CD4-positive, alpha-beta memory T cell (primary cell): ENCODE measurements at regions of chr22 and their contacts with region 1.

Region 1: GRCh38 chr22:25702040-25702439 is 39.9 kb upstream of the MYO18B start:
- DNase-seq: no peak
- H3K4me3 ChIP-seq: no peak overlapping the region
- H3K4me3 Mint-ChIP-seq: no peak overlapping the region
- H3K27ac ChIP-seq: no peak overlapping the region
- H3K27ac Mint-ChIP-seq: peak overlapping the region in 1 of 7 donors; percentile 37
- H3K4me1 ChIP-seq: no peaks in the 10 kb centered on the region
- H3K4me1 Mint-ChIP-seq: peaks cover 0 to 7% (median 3%) of the 10 kb centered on the region in 4 donors
- H3K27me3 ChIP-seq: no peaks in the 10 kb centered on the region
- H3K27me3 Mint-ChIP-seq: no peaks in the 10 kb centered on the region

Region 2: GRCh38 chr22:25465949-25466348 is 236.1 kb before region 1 on chr22:
- CTCF ChIA-PET with region 1: no interaction called
- POLR2A ChIA-PET with region 1: no interaction called
- intact Hi-C with region 1: loop called (anchors 1 kb)
- DNase-seq: no peak
- H3K4me3 ChIP-seq: no peak overlapping the region
- H3K4me3 Mint-ChIP-seq: no peak overlapping the region
- H3K27ac ChIP-seq: no peak overlapping the region
- H3K27ac Mint-ChIP-seq: peak overlapping the region in 1 of 7 donors; percentile 63
- H3K4me1 ChIP-seq: no peaks in the 10 kb centered on the region
- H3K4me1 Mint-ChIP-seq: peaks cover 0 to 7% (median 5%) of the 10 kb centered on the region in 4 donors
- H3K27me3 ChIP-seq: no peaks in the 10 kb centered on the region
- H3K27me3 Mint-ChIP-seq: no peaks in the 10 kb centered on the region

Region 3: DNA sequence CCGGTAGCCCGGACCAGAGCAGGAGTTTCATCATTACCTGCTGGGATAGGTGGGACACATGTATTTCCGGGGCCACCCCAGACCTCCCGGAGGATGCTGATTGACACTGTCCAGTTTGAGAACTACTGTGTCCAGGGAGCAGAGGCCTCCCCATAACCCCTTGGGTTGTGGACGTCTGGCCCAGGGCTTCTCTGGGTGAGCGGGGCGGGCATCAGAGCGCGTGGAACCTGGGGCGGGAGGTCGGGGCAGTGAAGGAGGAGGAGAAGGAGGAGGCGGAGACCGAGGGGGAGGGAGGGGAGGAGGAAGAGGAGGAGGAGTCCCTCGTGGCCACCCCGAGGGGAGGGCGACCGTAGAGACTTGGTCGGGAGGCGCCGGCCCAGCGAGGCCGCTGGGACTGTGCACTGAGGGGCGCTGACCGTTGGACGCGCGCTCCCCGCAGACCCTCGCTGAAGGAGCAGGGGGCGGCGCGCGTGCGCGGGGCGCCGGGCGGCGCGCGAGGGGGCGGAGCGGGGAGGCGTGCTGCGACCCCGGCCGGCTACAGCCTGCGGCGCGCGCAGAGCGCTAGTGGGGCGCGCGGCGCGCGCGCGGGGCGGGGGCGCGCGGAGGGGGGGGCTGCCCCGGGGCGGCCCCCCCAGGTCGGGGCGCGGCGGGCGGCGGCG is 137.6 kb before region 1 on chr22 and contains the start of gene GRK3:
- CTCF ChIA-PET with region 1: no interaction called
- POLR2A ChIA-PET with region 1: no interaction called
- intact Hi-C with region 1: loop called (anchors 10 kb)
- DNase-seq: peak; percentile 27 to 52 (median 38)
- H3K4me3 ChIP-seq: peak within 1 kb of the TSS; percentile 29 to 55
- H3K4me3 Mint-ChIP-seq: peak within 1 kb of the TSS; percentile 91 to 99 (median 96)
- H3K27ac ChIP-seq: peak within 1 kb of the TSS; percentile 15
- H3K27ac Mint-ChIP-seq: peak within 1 kb of the TSS; percentile 6 to 89 (median 71)
- H3K4me1 ChIP-seq: peaks cover 18% of the 10 kb centered on the region
- H3K4me1 Mint-ChIP-seq: peaks cover 14 to 26% (median 21%) of the 10 kb centered on the region in 4 donors
- H3K27me3 ChIP-seq: no peaks in the 10 kb centered on the region
- H3K27me3 Mint-ChIP-seq: peaks cover 5 to 9% of the 10 kb centered on the region in 2 donors
- total RNA-seq, gene GRK3: 2.9 to 3.2 TPM

Region 4: DNA sequence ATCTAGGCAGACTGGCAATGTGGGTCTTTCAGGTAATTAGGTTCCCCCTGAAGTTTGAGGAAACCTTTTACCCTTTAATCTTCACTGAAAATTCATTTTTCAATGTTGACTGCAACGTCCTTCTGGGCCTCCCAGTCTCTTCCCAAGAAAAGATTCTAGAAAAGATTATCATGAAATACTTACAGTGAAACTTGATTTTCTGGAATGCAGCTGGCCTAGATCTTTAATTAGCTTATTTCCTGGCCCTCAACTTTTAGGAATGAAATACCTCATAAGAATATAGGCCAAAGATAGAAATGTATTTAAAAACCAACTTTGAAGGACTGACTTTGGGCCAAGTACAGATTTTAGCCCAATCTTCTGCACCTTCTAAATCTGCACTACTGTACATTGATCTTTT is 16.7 kb before region 1 on chr22:
- CTCF ChIA-PET with region 1: no interaction called
- POLR2A ChIA-PET with region 1: no interaction called
- intact Hi-C with region 1: no loop called
- DNase-seq: no peak
- H3K4me3 ChIP-seq: no peak overlapping the region
- H3K4me3 Mint-ChIP-seq: no peak overlapping the region
- H3K27ac ChIP-seq: no peak overlapping the region
- H3K27ac Mint-ChIP-seq: no peak overlapping the region
- H3K4me1 ChIP-seq: no peaks in the 10 kb centered on the region
- H3K4me1 Mint-ChIP-seq: no peaks in the 10 kb centered on the region
- H3K27me3 ChIP-seq: no peaks in the 10 kb centered on the region
- H3K27me3 Mint-ChIP-seq: no peaks in the 10 kb centered on the region